ENCODE measurements at regions of chr6 and their contacts with region 1.

Region 1: DNA sequence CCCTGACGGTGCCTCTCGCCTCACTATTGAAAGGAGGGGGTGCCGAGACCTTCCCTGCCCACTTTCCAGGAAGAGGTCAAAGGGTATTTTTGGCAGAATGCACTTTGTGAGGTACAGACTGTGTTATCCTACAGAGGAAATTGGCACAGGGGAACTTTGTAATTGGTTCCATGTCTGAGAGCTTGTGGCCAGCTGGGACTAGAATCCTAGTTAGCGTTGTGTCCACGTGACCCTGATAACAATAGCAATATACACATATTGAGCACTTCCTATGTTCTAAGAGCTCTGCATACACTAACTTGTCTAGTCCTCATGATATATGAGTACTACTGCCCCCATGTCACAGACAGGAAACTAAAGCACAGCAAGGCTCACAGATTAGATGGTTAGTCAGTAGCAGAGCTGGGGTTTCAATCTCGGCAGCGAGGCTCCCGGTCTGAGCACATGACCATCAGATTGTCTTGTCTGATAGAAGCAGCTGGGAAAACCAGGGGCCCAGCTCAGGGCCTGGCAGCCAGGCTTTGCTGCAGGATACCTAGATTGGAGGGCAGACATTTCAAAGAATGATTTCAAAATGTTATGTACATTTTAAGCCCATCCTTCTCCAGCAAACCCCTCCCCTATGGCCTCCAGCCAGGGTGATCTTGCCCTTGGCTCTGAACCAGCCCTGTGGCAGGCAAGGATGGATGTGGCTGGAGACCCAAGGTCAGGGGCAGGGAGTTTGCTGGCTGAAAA is 1.4 kb downstream of the MAPK13 start:
- DNase-seq: peak; percentile 85
- H3K4me3 Mint-ChIP-seq: peak overlapping the region; percentile 83
- H3K27ac Mint-ChIP-seq: peak overlapping the region; percentile 93
- H3K4me1 Mint-ChIP-seq: peaks cover 41% of the 10 kb centered on the region
- H3K27me3 Mint-ChIP-seq: no peaks in the 10 kb centered on the region

Region 2: DNA sequence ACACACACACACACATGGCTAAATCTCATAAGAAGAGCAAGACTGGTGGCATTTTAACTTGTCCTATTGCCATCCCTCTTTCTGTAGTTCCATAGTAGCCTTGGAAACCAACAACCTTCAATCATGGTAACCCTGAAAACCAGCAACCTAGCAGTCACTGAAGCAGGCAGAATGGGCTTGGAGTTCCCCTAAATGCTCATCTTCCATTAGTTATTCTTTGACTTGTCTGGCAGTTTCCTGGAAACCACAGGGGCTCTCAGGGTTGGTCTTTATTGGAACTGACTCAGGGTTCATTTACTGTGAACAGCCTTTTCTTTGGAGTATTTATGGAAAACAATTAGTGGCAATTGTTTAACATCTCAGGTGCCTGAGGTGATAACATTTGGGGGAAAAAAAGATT is 45.5 kb after region 1 on chr6:
- CTCF ChIA-PET with region 1: no interaction called
- intact Hi-C with region 1: loop called (anchors 2 kb)
- DNase-seq: peak; percentile 64
- H3K4me3 Mint-ChIP-seq: no peak overlapping the region
- H3K27ac Mint-ChIP-seq: peak overlapping the region; percentile 20
- H3K4me1 Mint-ChIP-seq: peaks cover 19% of the 10 kb centered on the region
- H3K27me3 Mint-ChIP-seq: no peaks in the 10 kb centered on the region

Region 3: DNA sequence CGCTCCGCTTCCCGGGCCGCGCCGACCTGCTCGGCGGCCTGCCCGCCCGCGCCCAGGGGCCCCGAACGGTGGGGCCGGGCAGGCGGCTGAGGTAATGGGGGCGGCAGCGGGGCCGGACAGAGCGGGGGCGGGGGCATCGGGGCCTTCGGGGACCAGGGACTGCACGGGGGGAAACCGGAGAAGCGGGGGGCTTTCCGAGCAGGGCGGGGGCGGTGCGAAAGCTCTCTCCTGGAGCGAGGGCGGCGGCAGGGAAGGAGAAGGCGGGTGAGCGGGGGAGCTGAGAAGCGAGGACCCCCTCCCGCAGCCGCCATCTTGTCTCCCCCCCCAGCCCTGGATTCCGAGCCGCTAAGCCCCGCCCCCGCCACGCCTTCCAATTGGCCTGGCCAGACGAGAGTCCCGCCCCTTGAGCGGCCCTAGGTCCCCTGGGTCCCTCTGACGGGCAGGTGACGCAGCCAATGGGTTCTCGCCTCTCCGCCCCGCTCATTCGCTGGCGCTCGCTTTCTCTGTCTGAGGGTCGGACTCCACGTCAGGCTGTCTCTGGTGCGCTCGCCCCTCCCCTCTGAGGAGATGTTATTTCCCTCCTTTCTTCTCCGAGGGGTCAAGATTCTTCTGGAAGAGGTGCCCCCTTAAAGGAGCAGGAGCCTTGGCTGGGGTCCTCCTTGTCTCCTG is 65.3 kb after region 1 on chr6:
- CTCF ChIA-PET with region 1: interaction called, 12 read pairs
- intact Hi-C with region 1: loop called (anchors 1 kb)
- DNase-seq: peak; percentile 100
- H3K4me3 Mint-ChIP-seq: peak overlapping the region; percentile 89
- H3K27ac Mint-ChIP-seq: peak overlapping the region; percentile 93
- H3K4me1 Mint-ChIP-seq: peaks cover 43% of the 10 kb centered on the region
- H3K27me3 Mint-ChIP-seq: no peaks in the 10 kb centered on the region

Region 4: GRCh38 chr6:36268478-36269275 is 137.0 kb after region 1 on chr6:
- CTCF ChIA-PET with region 1: no interaction called
- intact Hi-C with region 1: no loop called
- DNase-seq: no peak
- H3K4me3 Mint-ChIP-seq: no peak overlapping the region
- H3K27ac Mint-ChIP-seq: no peak overlapping the region
- H3K4me1 Mint-ChIP-seq: no peaks in the 10 kb centered on the region
- H3K27me3 Mint-ChIP-seq: peaks cover 2% of the 10 kb centered on the region

Measured in activated naive CD4-positive, alpha-beta T cell treated with anti-CD3 and anti-CD28 coated beads for 36 hours (primary cell).